ENCODE measurements at regions of chr15 and their contacts with region 1.

Region 1: GRCh38 chr15:37059086-37059485 is 41.3 kb downstream of the MEIS2 start:
- DNase-seq: peak; percentile 15 to 91
- H3K4me3 ChIP-seq: no peak overlapping the region
- H3K27ac ChIP-seq: peak overlapping the region; percentile 60
- H3K4me1 ChIP-seq: peaks cover 54% of the 10 kb centered on the region
- H3K27me3 ChIP-seq: no peaks in the 10 kb centered on the region
- CTCF ChIP-seq: no peak

Region 2: DNA sequence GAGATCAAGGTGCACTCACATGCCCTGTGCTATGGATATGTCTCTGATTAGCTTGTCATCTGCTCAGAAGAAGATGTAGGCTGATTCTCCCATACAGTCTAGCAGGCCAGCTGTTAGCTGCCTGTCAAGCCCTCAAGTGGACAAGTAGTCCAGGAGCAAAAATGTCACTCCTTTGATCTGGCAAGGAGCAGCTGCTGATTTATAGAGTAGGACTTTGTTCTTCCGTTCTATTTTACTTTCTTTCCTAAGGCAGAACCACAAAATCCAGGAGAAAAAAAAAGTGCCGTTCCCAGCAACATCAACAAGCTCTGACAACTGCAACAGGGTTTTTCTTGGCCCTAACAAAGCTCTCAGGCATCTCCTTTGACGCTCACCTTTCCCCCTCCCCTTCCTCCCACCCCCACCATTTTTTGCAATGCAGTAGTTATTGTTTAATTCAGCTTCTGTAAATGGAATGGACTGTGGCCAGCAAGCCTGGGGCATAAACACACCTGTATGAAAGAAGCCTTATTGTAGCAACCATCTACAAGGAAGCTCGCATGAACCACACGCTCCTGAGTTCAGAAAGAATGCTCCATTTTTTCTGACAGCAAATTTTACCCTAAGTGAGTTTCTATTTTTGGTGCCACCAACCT is 155.0 kb before region 1 on chr15:
- CTCF ChIA-PET with region 1: no interaction called
- POLR2A ChIA-PET with region 1: no interaction called
- intact Hi-C with region 1: loop called (anchors 1 kb)
- DNase-seq: peak; percentile 68 to 89
- H3K4me3 ChIP-seq: no peak overlapping the region
- H3K27ac ChIP-seq: peak overlapping the region; percentile 21; the same call in 1 of the 2 replicates
- H3K4me1 ChIP-seq: peaks cover 17% of the 10 kb centered on the region
- H3K27me3 ChIP-seq: no peaks in the 10 kb centered on the region
- CTCF ChIP-seq: no peak

Region 3: DNA sequence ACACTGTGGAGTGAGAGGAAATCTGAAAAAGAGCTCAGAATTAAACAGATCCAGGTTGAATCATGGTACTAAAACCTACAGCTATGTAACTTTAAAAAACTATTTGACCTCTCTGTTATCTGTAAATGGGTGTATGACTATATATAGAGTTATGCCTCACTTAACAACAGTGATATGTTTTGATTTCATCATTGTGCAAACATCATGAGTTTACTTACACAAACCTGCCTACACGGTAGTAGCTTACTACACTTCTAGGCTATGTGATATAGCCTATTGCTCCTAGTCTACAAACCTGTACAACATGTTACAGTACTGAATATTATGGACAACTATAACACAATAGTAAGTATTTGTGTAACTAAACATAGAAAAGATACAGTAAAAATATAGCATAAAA is 232.8 kb after region 1 on chr15:
- CTCF ChIA-PET with region 1: no interaction called
- POLR2A ChIA-PET with region 1: interaction called, 11 read pairs
- intact Hi-C with region 1: no loop called
- DNase-seq: no peak
- H3K4me3 ChIP-seq: no peak overlapping the region
- H3K27ac ChIP-seq: no peak overlapping the region
- H3K4me1 ChIP-seq: no peaks in the 10 kb centered on the region
- H3K27me3 ChIP-seq: no peaks in the 10 kb centered on the region
- CTCF ChIP-seq: no peak

Measured in PC-9 (cell line).